PC-3 (cell line): ENCODE measurements at regions of chr2 and their contacts with region 1.

Region 1: GRCh38 chr2:169221745-169222369 is 140.5 kb downstream of the LRP2 start:
- DNase-seq: peak; percentile 73
- ATAC-seq: peak; percentile 82
- H3K4me3 ChIP-seq: 0 out of 2 replicates have a peak overlapping the region, but pooled peaks have one; percentile 29
- H3K27ac ChIP-seq: no peak overlapping the region
- H3K4me1 ChIP-seq: 0 out of 2 replicates have a peak, but pooled peaks cover 3% of the 10 kb centered on the region
- H3K27me3 ChIP-seq: peaks cover 15% of the 10 kb centered on the region
- CTCF ChIP-seq: peak; percentile 79

Region 2: GRCh38 chr2:168948621-168949212 is 273.1 kb before region 1 on chr2:
- CTCF ChIA-PET with region 1: interaction called, 3 read pairs
- POLR2A ChIA-PET with region 1: no interaction called
- intact Hi-C with region 1: loop called (anchors 1 kb)
- DNase-seq: peak; percentile 60
- ATAC-seq: peak; percentile 67
- H3K4me3 ChIP-seq: no peak overlapping the region
- H3K27ac ChIP-seq: no peak overlapping the region
- H3K4me1 ChIP-seq: peaks cover 8% of the 10 kb centered on the region
- H3K27me3 ChIP-seq: no peaks in the 10 kb centered on the region
- CTCF ChIP-seq: peak; percentile 84

Region 3: GRCh38 chr2:169397697-169398096 is 175.8 kb after region 1 on chr2:
- CTCF ChIA-PET with region 1: no interaction called
- POLR2A ChIA-PET with region 1: no interaction called
- intact Hi-C with region 1: loop called (anchors 5 kb)
- DNase-seq: peak; percentile 36
- ATAC-seq: no peak
- H3K4me3 ChIP-seq: no peak overlapping the region
- H3K27ac ChIP-seq: no peak overlapping the region
- H3K4me1 ChIP-seq: no peaks in the 10 kb centered on the region
- H3K27me3 ChIP-seq: peaks cover 49% of the 10 kb centered on the region
- CTCF ChIP-seq: peak; percentile 61

Region 4: DNA sequence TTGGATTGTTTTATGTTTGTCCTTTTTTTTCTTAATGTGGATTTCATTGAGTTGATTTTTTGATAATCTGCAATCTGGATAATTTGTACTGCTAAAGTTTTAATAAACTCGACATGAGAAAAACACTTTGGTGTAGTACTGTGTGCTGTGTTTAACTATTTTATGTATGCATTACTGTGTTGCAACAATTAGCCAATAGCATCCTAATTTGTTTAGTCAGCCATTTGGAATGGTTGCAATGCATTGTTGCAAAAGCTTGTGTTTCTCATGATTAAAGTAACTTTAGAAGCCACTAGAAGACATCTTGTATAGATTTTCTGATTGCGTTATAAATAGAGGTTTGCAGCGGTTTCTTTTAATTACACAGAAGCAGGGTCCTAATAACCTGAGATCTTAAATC is 415.8 kb after region 1 on chr2:
- CTCF ChIA-PET with region 1: no interaction called
- POLR2A ChIA-PET with region 1: no interaction called
- intact Hi-C with region 1: no loop called
- DNase-seq: no peak
- ATAC-seq: no peak
- H3K4me3 ChIP-seq: no peak overlapping the region
- H3K27ac ChIP-seq: no peak overlapping the region
- H3K4me1 ChIP-seq: no peaks in the 10 kb centered on the region
- H3K27me3 ChIP-seq: no peaks in the 10 kb centered on the region
- CTCF ChIP-seq: no peak